Activated CD4-positive, alpha-beta T cell treated with anti-CD3 and anti-CD28 coated beads for 36 hours (primary cell): ENCODE measurements at regions of chr9 and their contacts with region 1.

Region 1: DNA sequence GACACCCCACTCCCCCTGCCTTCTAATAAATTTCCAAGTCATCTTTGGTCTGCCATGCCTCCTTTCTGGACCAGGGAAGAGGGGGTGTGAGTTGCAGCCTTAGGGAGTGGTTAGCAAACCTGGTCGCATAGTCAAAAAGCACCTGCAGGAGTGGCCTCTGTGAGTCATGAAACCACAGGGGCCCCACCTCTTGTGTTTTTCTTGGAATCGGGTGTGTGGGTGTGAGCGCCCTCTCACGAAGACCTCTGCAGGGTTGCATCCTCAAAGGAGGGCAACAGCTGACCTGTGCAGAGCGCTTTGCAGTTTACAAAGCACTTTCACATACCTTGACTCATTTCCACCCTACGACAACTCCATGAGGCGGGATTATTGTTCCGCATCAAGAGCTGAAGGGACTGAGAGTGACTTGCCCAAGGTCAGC is 36.8 kb upstream of the TEX48 start:
- DNase-seq: peak; percentile 95
- ATAC-seq: peak; percentile 94
- H3K4me3 Mint-ChIP-seq: peak overlapping the region; percentile 15
- H3K27ac Mint-ChIP-seq: peak overlapping the region; percentile 96
- H3K4me1 Mint-ChIP-seq: peaks cover 56% of the 10 kb centered on the region
- H3K27me3 Mint-ChIP-seq: peaks cover 2% of the 10 kb centered on the region

Region 2: DNA sequence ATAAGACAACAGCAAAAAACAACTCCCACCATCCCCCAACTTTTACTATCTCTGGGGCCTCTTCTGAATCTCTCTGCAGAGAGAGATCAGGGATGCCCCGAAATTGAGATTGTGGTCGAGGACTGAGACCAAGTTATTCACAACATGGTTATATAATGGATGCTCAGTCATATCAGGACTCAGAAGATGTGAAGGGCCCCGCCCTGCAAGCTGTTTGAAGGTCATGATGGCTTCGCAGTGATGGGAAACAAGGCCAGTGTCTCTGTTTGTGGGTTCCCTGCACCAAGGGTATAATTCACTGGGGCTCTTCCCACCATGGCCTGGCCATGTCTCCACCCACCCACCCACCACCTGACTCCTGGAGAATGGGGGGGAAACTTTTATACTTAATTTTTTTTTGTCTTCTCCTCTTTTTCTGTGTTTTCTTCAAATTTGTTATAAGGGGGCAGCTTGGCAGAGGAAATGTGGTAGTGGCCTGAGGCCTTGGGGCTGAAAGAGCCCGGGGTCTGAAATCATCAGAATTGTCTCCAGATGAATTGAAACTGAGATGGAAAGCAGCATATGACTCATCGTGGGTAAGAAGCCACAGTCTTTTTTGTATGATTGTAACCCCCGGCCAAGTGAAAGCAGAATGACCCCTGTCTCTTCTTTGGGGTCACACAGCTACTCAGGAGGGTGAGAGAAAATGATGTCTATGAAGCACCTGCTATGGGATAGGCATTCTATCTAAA is 21.8 kb before region 1 on chr9:
- CTCF ChIA-PET with region 1: interaction called, 10 read pairs
- POLR2A ChIA-PET with region 1: interaction called, 22 read pairs
- intact Hi-C with region 1: loop called (anchors 1 kb)
- DNase-seq: peak; percentile 86
- ATAC-seq: peak; percentile 49
- H3K4me3 Mint-ChIP-seq: peak overlapping the region; percentile 28
- H3K27ac Mint-ChIP-seq: peak overlapping the region; percentile 89
- H3K4me1 Mint-ChIP-seq: peaks cover 89% of the 10 kb centered on the region
- H3K27me3 Mint-ChIP-seq: no peaks in the 10 kb centered on the region

Region 3: GRCh38 chr9:114701988-114702387 is 16.8 kb before region 1 on chr9:
- CTCF ChIA-PET with region 1: interaction called, 10 read pairs
- POLR2A ChIA-PET with region 1: interaction called, 22 read pairs
- intact Hi-C with region 1: loop called (anchors 1 kb)
- DNase-seq: no peak
- ATAC-seq: no peak
- H3K4me3 Mint-ChIP-seq: no peak overlapping the region
- H3K27ac Mint-ChIP-seq: peak overlapping the region; percentile 66
- H3K4me1 Mint-ChIP-seq: peaks cover 59% of the 10 kb centered on the region
- H3K27me3 Mint-ChIP-seq: no peaks in the 10 kb centered on the region

Region 4: GRCh38 chr9:114738581-114739316 is 19.9 kb after region 1 on chr9:
- CTCF ChIA-PET with region 1: interaction called, 4 read pairs
- POLR2A ChIA-PET with region 1: interaction called, 6 read pairs
- intact Hi-C with region 1: loop called (anchors 1 kb)
- DNase-seq: peak; percentile 80
- ATAC-seq: peak; percentile 70
- H3K4me3 Mint-ChIP-seq: no peak overlapping the region
- H3K27ac Mint-ChIP-seq: peak overlapping the region; percentile 84
- H3K4me1 Mint-ChIP-seq: peaks cover 56% of the 10 kb centered on the region
- H3K27me3 Mint-ChIP-seq: no peaks in the 10 kb centered on the region

Region 5: DNA sequence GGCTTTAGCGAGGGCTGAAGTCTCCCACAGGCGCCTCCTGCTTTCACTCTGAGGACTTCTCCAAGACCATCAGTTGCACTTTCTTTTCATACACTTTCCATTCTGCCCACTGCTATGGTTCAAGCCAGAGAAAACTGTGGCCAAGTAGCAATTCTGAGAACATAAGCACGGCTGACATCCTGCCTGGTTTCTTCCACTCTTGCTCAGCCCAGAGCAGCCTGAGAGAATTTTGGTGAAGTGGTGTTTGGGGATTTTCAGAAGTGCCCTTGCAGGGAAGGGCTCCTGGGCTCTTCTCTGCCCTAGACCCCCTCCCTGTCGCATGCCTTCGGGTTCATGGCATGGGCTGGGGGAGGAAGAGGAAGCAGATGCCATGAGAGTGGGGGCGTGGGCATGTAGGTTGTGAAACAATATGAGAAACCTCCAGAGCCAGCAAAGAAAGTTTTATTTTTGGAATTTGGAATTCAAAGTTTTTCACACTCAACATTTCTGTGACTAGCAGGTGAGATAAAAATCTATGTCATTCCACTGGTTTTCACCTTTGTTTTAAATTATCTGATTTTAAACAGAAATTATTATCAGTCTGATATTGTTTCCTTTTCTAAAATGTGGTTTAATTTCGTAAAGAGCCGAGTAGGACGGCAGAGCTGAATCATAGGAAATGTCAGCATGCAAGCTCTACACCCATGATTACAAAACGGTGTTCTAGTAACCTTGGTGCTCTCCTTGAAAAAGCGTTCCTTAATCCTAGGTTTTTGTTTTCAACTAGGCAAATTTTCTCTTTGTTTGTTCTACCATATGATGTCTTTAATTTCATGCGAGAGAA is 239.4 kb after region 1 on chr9:
- CTCF ChIA-PET with region 1: no interaction called
- POLR2A ChIA-PET with region 1: interaction called, 3 read pairs
- intact Hi-C with region 1: loop called in 1 of 2 experiments (anchors 1 kb)
- DNase-seq: peak; percentile 68
- ATAC-seq: peak; percentile 83
- H3K4me3 Mint-ChIP-seq: peak overlapping the region; percentile 68
- H3K27ac Mint-ChIP-seq: peak overlapping the region; percentile 96
- H3K4me1 Mint-ChIP-seq: peaks cover 56% of the 10 kb centered on the region
- H3K27me3 Mint-ChIP-seq: no peaks in the 10 kb centered on the region

Region 6: GRCh38 chr9:115035841-115036612 is 317.2 kb after region 1 on chr9:
- CTCF ChIA-PET with region 1: no interaction called
- POLR2A ChIA-PET with region 1: no interaction called
- intact Hi-C with region 1: loop called in 1 of 2 experiments (anchors 1 kb)
- DNase-seq: peak; percentile 71
- ATAC-seq: peak; percentile 87
- H3K4me3 Mint-ChIP-seq: peak overlapping the region; percentile 1
- H3K27ac Mint-ChIP-seq: peak overlapping the region; percentile 84
- H3K4me1 Mint-ChIP-seq: peaks cover 24% of the 10 kb centered on the region
- H3K27me3 Mint-ChIP-seq: peaks cover 7% of the 10 kb centered on the region